ENCODE measurements at regions of chr19 and their contacts with region 1.

Region 1: DNA sequence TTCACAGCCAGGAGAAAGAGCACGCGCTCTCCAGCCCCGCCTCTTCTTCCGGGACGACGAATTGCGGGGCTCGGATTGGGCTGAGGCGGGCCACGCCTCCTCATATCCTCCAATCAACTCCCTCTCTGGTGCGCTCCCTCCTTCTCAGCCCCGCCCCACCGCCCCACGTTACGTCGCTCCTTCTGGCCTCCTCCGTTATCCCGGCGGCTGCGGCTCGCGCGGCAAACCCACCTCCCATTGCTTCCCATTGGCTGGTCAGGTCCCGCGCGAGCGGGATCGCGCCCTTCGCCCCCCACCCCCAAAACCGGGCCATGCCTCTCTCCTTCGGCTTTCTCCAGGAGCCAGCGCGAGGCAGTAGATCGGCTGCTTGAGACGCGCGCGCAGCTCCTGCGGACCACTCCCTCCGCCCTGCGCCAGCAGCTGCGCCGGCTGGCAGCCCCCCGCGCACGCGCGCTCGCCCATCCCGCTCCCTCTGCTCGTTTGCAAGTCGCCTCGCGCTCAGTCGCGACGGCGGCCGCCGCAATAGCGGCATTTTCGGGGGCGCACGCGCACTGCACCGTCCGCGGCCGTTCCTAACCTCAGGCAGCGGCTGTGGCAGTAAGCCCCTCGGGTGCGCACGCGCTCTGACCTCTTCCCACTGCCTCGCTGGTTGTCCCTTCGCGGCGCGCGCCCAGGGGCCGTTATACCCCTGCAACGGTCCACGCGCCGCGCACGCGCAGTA is 512 bp upstream of the ARHGAP35 start:
- DNase-seq: peak; percentile 95
- H3K4me3 ChIP-seq: peak overlapping the region; percentile 74 to 88 (median 84)
- H3K27ac ChIP-seq: peak overlapping the region; percentile 95
- H3K4me1 ChIP-seq: peaks cover 4 to 16% (median 8%) of the 10 kb centered on the region in 4 experiments
- H3K27me3 ChIP-seq: peaks cover 0 to 1% (median under 1%) of the 10 kb centered on the region in 4 experiments; a peak in 1 of 7 replicates
- CTCF ChIP-seq: no peak
- EP300 ChIP-seq: no peak
- POLR2A ChIP-seq: peak; percentile 74 to 81
- RAD21 ChIP-seq: no peak

Region 2: DNA sequence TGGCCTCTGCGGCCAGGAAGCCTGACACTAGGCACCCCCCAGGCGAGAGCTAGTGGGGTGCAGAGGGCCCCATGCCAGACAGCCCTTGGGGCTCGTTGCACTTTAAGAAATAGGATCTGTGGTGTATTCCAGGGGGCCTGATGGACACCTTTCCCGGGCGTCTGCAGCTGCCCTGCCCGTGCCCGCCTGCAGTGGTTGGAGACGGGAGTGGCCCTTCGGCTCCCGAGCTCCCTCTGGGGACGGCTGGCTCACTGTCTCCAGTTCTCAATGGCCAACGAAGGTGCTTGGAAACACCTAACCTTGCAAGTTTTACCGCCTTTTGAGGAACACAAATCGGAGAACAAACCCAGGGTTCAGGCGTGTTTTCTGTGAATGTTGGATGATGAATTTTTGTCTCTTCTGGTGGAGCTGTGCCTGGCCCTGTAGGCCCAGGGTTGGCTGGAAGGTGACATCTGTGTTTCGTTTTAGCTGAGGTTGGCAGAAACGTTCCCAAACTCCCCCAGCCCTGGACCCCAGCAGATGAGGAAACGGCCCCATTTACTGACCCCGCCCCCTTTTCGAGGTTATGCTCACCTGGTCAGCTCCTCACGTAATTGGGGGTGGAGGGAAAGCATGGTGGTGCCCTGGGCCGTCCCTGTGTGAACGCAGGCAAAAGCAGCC is 142.0 kb after region 1 on chr19:
- CTCF ChIA-PET with region 1: interaction called, 12 read pairs
- POLR2A ChIA-PET with region 1: interaction called, 3 read pairs
- DNase-seq: no peak
- H3K4me3 ChIP-seq: no peak overlapping the region
- H3K27ac ChIP-seq: no peak overlapping the region
- H3K4me1 ChIP-seq: peaks cover 0 to 5% (median 0%) of the 10 kb centered on the region in 4 experiments; a peak in 2 of 7 replicates
- H3K27me3 ChIP-seq: no peaks in the 10 kb centered on the region
- CTCF ChIP-seq: peak in 2 of 3 experiments; percentile 24 to 35; a peak in 3 of 4 replicates
- EP300 ChIP-seq: no peak
- POLR2A ChIP-seq: no peak
- RAD21 ChIP-seq: peak in 1 of 2 experiments; percentile 26; a peak in 2 of 4 replicates